CD4-positive, alpha-beta T cell (primary cell): ENCODE measurements at regions of chr19 and their contacts with region 1.

Region 1: GRCh38 chr19:11964858-11965645 is at the start of gene ZNF763:
- DNase-seq: peak; percentile 80 to 95 (median 86)
- ATAC-seq: peak; percentile 93
- H3K4me3 ChIP-seq: peak within 1 kb of the TSS; percentile 67
- H3K4me3 Mint-ChIP-seq: peak within 1 kb of the TSS; percentile 95
- H3K27ac ChIP-seq: peak within 1 kb of the TSS; percentile 80 to 83
- H3K27ac Mint-ChIP-seq: peak within 1 kb of the TSS; percentile 88
- H3K4me1 ChIP-seq: peaks cover 28% of the 10 kb centered on the region
- H3K4me1 Mint-ChIP-seq: peaks cover 27% of the 10 kb centered on the region
- H3K27me3 ChIP-seq: no peaks in the 10 kb centered on the region
- H3K27me3 Mint-ChIP-seq: no peaks in the 10 kb centered on the region
- CTCF ChIP-seq: no peak
- total RNA-seq, gene ZNF763: 2.5 to 2.9 TPM

Region 2: GRCh38 chr19:11881151-11881800 is 83.8 kb before region 1 on chr19:
- CTCF ChIA-PET with region 1: no interaction called
- POLR2A ChIA-PET with region 1: no interaction called
- intact Hi-C with region 1: loop called (anchors 1 to 2 kb)
- DNase-seq: peak; percentile 39 to 82 (median 54)
- ATAC-seq: peak; percentile 60
- H3K4me3 ChIP-seq: no peak overlapping the region
- H3K4me3 Mint-ChIP-seq: no peak overlapping the region
- H3K27ac ChIP-seq: no peak overlapping the region
- H3K27ac Mint-ChIP-seq: no peak overlapping the region
- H3K4me1 ChIP-seq: peaks cover 4% of the 10 kb centered on the region
- H3K4me1 Mint-ChIP-seq: no peaks in the 10 kb centered on the region
- H3K27me3 ChIP-seq: no peaks in the 10 kb centered on the region
- H3K27me3 Mint-ChIP-seq: no peaks in the 10 kb centered on the region
- CTCF ChIP-seq: peak; percentile 74

Region 3: GRCh38 chr19:11902228-11902627 is 62.8 kb before region 1 on chr19:
- CTCF ChIA-PET with region 1: no interaction called
- POLR2A ChIA-PET with region 1: no interaction called
- intact Hi-C with region 1: no loop called
- DNase-seq: no peak
- ATAC-seq: no peak
- H3K4me3 ChIP-seq: no peak overlapping the region
- H3K4me3 Mint-ChIP-seq: no peak overlapping the region
- H3K27ac ChIP-seq: no peak overlapping the region
- H3K27ac Mint-ChIP-seq: no peak overlapping the region
- H3K4me1 ChIP-seq: no peaks in the 10 kb centered on the region
- H3K4me1 Mint-ChIP-seq: no peaks in the 10 kb centered on the region
- H3K27me3 ChIP-seq: no peaks in the 10 kb centered on the region
- H3K27me3 Mint-ChIP-seq: no peaks in the 10 kb centered on the region
- CTCF ChIP-seq: no peak

Region 4: DNA sequence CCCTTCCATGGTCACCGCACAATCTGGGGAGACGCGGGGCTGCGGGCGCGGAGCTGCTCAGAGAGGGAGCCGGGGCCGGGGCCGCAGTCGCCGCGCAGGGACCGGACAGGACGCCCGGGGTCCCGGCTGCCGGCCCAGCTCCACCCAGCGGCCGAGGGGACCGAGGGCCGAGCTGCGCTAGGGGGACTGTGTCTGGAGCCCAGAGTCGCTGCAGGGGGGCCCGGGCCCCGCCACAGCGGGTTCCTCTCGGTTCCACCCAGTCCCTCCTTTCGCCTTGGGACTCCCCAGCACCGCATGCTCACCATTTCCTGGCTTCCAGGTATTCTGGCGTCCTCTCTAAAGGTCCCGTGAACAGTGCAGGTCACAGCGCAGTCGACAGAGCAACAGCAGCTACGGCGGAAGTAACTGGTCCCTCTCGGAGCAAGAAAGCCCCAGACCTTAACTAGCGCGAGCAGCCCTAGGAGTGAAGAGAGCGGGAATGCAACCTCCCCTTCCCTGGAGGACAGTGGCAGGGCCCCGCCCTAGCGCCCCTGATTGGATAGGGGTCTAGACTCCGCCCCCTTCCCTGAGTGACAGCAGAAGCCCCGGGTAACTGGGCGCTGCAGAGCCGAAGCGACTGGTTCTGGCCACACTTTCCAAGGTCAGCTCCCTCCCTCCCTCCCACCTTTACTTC is 87.6 kb after region 1 on chr19 and contains the start of gene ZNF878:
- CTCF ChIA-PET with region 1: interaction called, 4 read pairs
- POLR2A ChIA-PET with region 1: no interaction called
- intact Hi-C with region 1: loop called in 1 of 2 experiments (anchors 10 kb)
- DNase-seq: peak in 12 of 14 experiments; percentile 15 to 68 (median 30)
- ATAC-seq: peak; percentile 71
- H3K4me3 ChIP-seq: peak within 1 kb of the TSS; percentile 60
- H3K4me3 Mint-ChIP-seq: peak within 1 kb of the TSS; percentile 90
- H3K27ac ChIP-seq: no peak within 1 kb of the TSS
- H3K27ac Mint-ChIP-seq: no peak within 1 kb of the TSS
- H3K4me1 ChIP-seq: peaks cover 16% of the 10 kb centered on the region
- H3K4me1 Mint-ChIP-seq: peaks cover 17% of the 10 kb centered on the region
- H3K27me3 ChIP-seq: peaks cover 0 to 7% of the 10 kb centered on the region in 2 experiments
- H3K27me3 Mint-ChIP-seq: peaks cover 34% of the 10 kb centered on the region
- CTCF ChIP-seq: no peak
- total RNA-seq, gene ZNF878: not detected

Region 5: GRCh38 chr19:12064590-12065538 is 99.8 kb after region 1 on chr19 and contains the start of gene ZNF844:
- CTCF ChIA-PET with region 1: interaction called, 10 read pairs
- POLR2A ChIA-PET with region 1: no interaction called
- intact Hi-C with region 1: no loop called
- DNase-seq: peak; percentile 40 to 84 (median 62)
- ATAC-seq: peak; percentile 87
- H3K4me3 ChIP-seq: peak within 1 kb of the TSS; percentile 74
- H3K4me3 Mint-ChIP-seq: peak within 1 kb of the TSS; percentile 91
- H3K27ac ChIP-seq: peak within 1 kb of the TSS in 1 of 2 donors; percentile 46
- H3K27ac Mint-ChIP-seq: peak within 1 kb of the TSS; percentile 65
- H3K4me1 ChIP-seq: peaks cover 21% of the 10 kb centered on the region
- H3K4me1 Mint-ChIP-seq: peaks cover 5% of the 10 kb centered on the region
- H3K27me3 ChIP-seq: no peaks in the 10 kb centered on the region
- H3K27me3 Mint-ChIP-seq: no peaks in the 10 kb centered on the region
- CTCF ChIP-seq: no peak
- total RNA-seq, gene ZNF844: 22.2 to 23.7 TPM

Region 6: DNA sequence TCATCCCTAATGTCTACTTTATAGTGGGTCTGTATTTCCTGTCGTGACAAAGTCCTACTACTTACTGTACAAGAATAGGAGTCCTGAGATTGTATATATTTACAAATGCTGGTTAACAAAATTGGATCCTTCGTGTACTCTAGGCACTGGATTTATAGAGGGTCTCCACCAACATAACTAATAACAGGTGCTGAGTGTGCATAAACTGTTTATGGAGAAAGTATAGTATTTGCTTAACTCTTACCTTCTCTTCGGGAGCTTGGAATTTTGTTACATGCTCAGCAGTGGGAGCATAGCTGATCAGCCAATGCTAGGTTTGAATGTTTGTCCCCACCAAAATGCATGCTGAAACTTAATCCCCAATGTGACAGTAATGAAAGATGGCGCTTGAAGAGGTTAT is 388.3 kb after region 1 on chr19:
- CTCF ChIA-PET with region 1: no interaction called
- POLR2A ChIA-PET with region 1: no interaction called
- intact Hi-C with region 1: no loop called
- DNase-seq: no peak
- ATAC-seq: no peak
- H3K4me3 ChIP-seq: no peak overlapping the region
- H3K4me3 Mint-ChIP-seq: no peak overlapping the region
- H3K27ac ChIP-seq: no peak overlapping the region
- H3K27ac Mint-ChIP-seq: no peak overlapping the region
- H3K4me1 ChIP-seq: no peaks in the 10 kb centered on the region
- H3K4me1 Mint-ChIP-seq: no peaks in the 10 kb centered on the region
- H3K27me3 ChIP-seq: no peaks in the 10 kb centered on the region
- H3K27me3 Mint-ChIP-seq: no peaks in the 10 kb centered on the region
- CTCF ChIP-seq: no peak